ENCODE measurements at regions of chr11 and their contacts with region 1.

Region 1: DNA sequence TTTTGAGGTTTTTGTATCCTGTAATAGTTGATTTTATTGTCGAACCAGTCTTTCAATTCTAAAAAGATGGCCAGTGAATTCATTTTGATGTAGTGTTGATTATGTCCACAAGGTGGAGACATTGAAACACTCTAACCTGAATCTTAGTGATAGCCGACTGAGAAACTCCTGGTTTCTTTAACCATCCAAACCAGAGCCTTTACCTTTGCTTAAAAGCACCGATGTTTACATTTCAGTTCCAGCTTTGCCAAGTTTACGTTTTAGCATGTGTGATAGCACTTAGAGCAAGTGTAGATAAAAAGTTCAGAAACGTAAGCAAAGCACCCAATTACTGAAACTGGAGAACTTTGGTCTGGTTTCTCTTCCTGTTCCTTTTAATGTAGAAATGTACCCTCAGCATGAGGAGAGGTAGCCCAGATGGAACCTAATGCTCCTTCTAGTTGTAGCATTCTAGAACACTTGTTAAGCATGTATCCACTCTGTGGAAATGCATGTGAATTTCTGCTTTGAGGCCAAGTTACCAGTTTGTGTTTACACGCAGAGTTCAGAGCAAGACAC is 208.6 kb downstream of the DBX1 start:
- DNase-seq: peak; percentile 70
- ATAC-seq: peak; percentile 23
- H3K4me3 ChIP-seq: peak overlapping the region; percentile 20 to 47 (median 36); a peak in 2 of 6 replicates
- H3K27ac ChIP-seq: peak overlapping the region; percentile 47
- H3K4me1 ChIP-seq: peaks cover 60% of the 10 kb centered on the region
- H3K27me3 ChIP-seq: no peaks in the 10 kb centered on the region
- CTCF ChIP-seq: peak; percentile 82
- EP300 ChIP-seq: no peak
- POLR2A ChIP-seq: no peak
- RAD21 ChIP-seq: peak; percentile 68

Region 2: DNA sequence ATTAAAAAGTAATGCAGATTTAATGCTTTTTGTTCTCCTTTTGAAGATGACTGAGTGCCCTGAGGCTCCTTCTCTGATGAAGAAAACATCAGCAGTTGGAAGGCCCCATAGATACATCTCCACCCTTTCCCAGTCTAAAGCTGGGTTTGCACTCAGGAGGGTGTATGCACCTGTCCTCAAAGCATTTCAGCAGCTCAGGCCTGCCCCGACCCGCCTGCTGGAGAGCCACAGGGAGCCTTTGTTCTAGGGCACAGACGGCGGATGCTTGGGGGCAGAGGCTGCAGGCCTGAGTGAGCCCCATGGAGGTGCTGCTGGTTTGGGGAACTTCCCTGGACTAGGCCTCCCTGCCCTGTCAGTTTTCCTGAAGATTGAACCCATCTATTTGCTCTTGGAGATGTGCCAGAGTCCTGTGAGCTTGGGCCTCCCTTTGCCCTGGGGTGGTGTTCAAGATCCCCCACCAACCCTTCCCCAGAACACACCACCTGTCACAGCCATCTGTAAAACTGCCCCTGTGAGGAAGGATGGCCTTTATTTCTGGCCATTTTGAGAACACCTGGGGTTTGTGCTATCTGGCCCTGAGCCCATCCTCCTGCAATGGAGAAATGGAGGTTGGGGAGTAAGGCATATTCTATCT is 79.0 kb before region 1 on chr11:
- CTCF ChIA-PET with region 1: no interaction called
- POLR2A ChIA-PET with region 1: no interaction called
- in situ Hi-C with region 1: no loop called
- intact Hi-C with region 1: no loop called
- DNase-seq: no peak
- ATAC-seq: no peak
- H3K4me3 ChIP-seq: no peak overlapping the region
- H3K27ac ChIP-seq: no peak overlapping the region
- H3K4me1 ChIP-seq: no peaks in the 10 kb centered on the region
- H3K27me3 ChIP-seq: peaks cover 1 to 17% of the 10 kb centered on the region in 2 experiments; a peak in 4 of 5 replicates
- CTCF ChIP-seq: no peak
- EP300 ChIP-seq: no peak
- POLR2A ChIP-seq: no peak
- RAD21 ChIP-seq: no peak

Region 3: DNA sequence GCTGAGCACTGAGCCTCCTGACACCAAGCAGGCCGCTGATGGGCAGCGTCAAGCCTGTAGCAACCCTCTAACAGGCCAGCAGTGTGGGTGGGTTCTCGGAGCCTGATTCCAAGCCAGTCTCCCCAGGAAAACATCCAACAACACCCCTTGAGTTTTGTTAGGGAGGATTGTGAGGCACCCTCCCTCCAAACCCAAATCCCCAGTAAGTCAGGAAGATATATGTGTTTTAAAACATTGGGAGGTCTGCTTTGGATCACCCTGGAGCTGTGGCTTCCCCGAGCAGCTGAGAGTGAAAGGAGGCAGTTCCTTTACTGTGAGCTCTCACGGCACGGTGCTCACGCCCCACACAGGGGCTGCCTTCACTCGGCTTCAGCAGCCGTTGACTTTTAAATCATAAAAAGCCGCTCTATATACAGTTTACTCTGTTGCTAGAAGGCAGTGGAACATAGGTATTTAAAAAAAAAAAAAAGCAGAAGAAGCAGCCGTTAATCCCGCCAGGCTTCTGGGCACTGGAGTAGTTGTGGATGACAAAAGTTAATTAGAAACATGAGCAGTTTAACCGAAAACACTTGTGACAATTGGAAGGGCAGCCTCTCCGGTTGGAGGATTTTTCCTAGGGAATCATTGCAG is 20.4 kb before region 1 on chr11:
- CTCF ChIA-PET with region 1: no interaction called
- POLR2A ChIA-PET with region 1: interaction called, 7 read pairs
- in situ Hi-C with region 1: no loop called
- intact Hi-C with region 1: loop called (anchors 1 kb)
- DNase-seq: no peak
- ATAC-seq: no peak
- H3K4me3 ChIP-seq: no peak overlapping the region
- H3K27ac ChIP-seq: no peak overlapping the region
- H3K4me1 ChIP-seq: peaks cover 27% of the 10 kb centered on the region
- H3K27me3 ChIP-seq: no peaks in the 10 kb centered on the region
- CTCF ChIP-seq: no peak
- EP300 ChIP-seq: no peak
- POLR2A ChIP-seq: no peak
- RAD21 ChIP-seq: no peak

Region 4: GRCh38 chr11:20000351-20001134 is 48.9 kb after region 1 on chr11:
- CTCF ChIA-PET with region 1: no interaction called
- POLR2A ChIA-PET with region 1: interaction called, 35 read pairs
- in situ Hi-C with region 1: no loop called
- intact Hi-C with region 1: loop called (anchors 1 kb)
- DNase-seq: peak; percentile 88
- ATAC-seq: peak; percentile 74
- H3K4me3 ChIP-seq: peak overlapping the region; percentile 18 to 65 (median 28); a peak in 5 of 6 replicates
- H3K27ac ChIP-seq: peak overlapping the region; percentile 86
- H3K4me1 ChIP-seq: peaks cover 75% of the 10 kb centered on the region
- H3K27me3 ChIP-seq: no peaks in the 10 kb centered on the region
- CTCF ChIP-seq: peak; percentile 28; the same call in 1 of the 2 replicates
- EP300 ChIP-seq: peak in 1 of 2 experiments; percentile 68; a peak in 2 of 4 replicates
- POLR2A ChIP-seq: peak; percentile 38 to 55; a peak in 2 of 4 replicates
- RAD21 ChIP-seq: peak; percentile 22; the same call in 1 of the 2 replicates

Region 5: GRCh38 chr11:20035701-20036620 is 84.3 kb after region 1 on chr11:
- CTCF ChIA-PET with region 1: interaction called, 3 read pairs
- POLR2A ChIA-PET with region 1: interaction called, 6 read pairs
- in situ Hi-C with region 1: no loop called
- intact Hi-C with region 1: loop called (anchors 1 kb)
- DNase-seq: peak; percentile 91
- ATAC-seq: peak; percentile 87
- H3K4me3 ChIP-seq: peak overlapping the region in 2 of 3 experiments; percentile 17 to 53; a peak in 3 of 6 replicates
- H3K27ac ChIP-seq: peak overlapping the region; percentile 63
- H3K4me1 ChIP-seq: peaks cover 74% of the 10 kb centered on the region
- H3K27me3 ChIP-seq: no peaks in the 10 kb centered on the region
- CTCF ChIP-seq: no peak
- EP300 ChIP-seq: peak in 1 of 2 experiments; percentile 92; a peak in 2 of 4 replicates
- POLR2A ChIP-seq: peak; percentile 23 to 38; a peak in 2 of 4 replicates
- RAD21 ChIP-seq: no peak

Region 6: GRCh38 chr11:20127671-20128527 is 176.3 kb after region 1 on chr11:
- CTCF ChIA-PET with region 1: interaction called, 6 read pairs
- POLR2A ChIA-PET with region 1: interaction called, 3 read pairs
- in situ Hi-C with region 1: loop called (anchors 5 kb)
- intact Hi-C with region 1: loop called (anchors 1 kb)
- DNase-seq: peak; percentile 52
- ATAC-seq: peak; percentile 90
- H3K4me3 ChIP-seq: no peak overlapping the region
- H3K27ac ChIP-seq: no peak overlapping the region
- H3K4me1 ChIP-seq: peaks cover 16% of the 10 kb centered on the region; the same call in 1 of the 2 replicates
- H3K27me3 ChIP-seq: peaks cover 0 to 19% of the 10 kb centered on the region in 2 experiments; a peak in 2 of 5 replicates
- CTCF ChIP-seq: peak; percentile 92
- EP300 ChIP-seq: no peak
- POLR2A ChIP-seq: no peak
- RAD21 ChIP-seq: peak; percentile 66

Region 7: GRCh38 chr11:20374746-20375300 is 423.2 kb after region 1 on chr11:
- CTCF ChIA-PET with region 1: no interaction called
- POLR2A ChIA-PET with region 1: no interaction called
- in situ Hi-C with region 1: no loop called
- intact Hi-C with region 1: no loop called
- DNase-seq: no peak
- ATAC-seq: peak; percentile 71
- H3K4me3 ChIP-seq: no peak overlapping the region
- H3K27ac ChIP-seq: no peak overlapping the region
- H3K4me1 ChIP-seq: peaks cover 15% of the 10 kb centered on the region
- H3K27me3 ChIP-seq: no peaks in the 10 kb centered on the region
- CTCF ChIP-seq: no peak
- EP300 ChIP-seq: no peak
- POLR2A ChIP-seq: no peak
- RAD21 ChIP-seq: no peak